GM12878 (cell line): ENCODE measurements at regions of chr2 and their contacts with region 1.

Region 1: GRCh38 chr2:196068271-196069209 is at the start of gene DNAH7:
- DNase-seq: peak; percentile 64
- ATAC-seq: peak; percentile 98
- H3K4me3 ChIP-seq: peak within 1 kb of the TSS; percentile 68
- H3K27ac ChIP-seq: peak within 1 kb of the TSS; percentile 43
- H3K4me1 ChIP-seq: no peaks in the 10 kb centered on the region; the same call in 1 of the 2 replicates
- H3K27me3 ChIP-seq: no peaks in the 10 kb centered on the region
- CTCF ChIP-seq: peak; percentile 91 to 98 (median 97); a peak in 5 of 6 replicates
- EP300 ChIP-seq: no peak; a peak in 1 of 4 replicates
- POLR2A ChIP-seq: peak; percentile 22; the same call in 1 of the 2 replicates
- RAD21 ChIP-seq: peak; percentile 92
- polyA plus RNA-seq, gene DNAH7: 0.05 to 0.14 TPM

Region 2: GRCh38 chr2:195533771-195534642 is 534.5 kb before region 1 on chr2:
- CTCF ChIA-PET with region 1: interaction called, 13 read pairs
- POLR2A ChIA-PET with region 1: no interaction called
- RAD21 ChIA-PET with region 1: interaction called, 4 read pairs
- SMC1A ChIA-PET with region 1: interaction called, 14 read pairs
- in situ Hi-C with region 1: no loop called
- intact Hi-C with region 1: no loop called
- DNase-seq: no peak
- ATAC-seq: peak; percentile 42
- H3K4me3 ChIP-seq: no peak overlapping the region
- H3K27ac ChIP-seq: no peak overlapping the region; the same call in 1 of the 2 replicates
- H3K4me1 ChIP-seq: peaks cover 29% of the 10 kb centered on the region
- H3K27me3 ChIP-seq: no peaks in the 10 kb centered on the region
- CTCF ChIP-seq: peak; percentile 23 to 35 (median 30); a peak in 3 of 6 replicates
- EP300 ChIP-seq: no peak
- POLR2A ChIP-seq: no peak
- RAD21 ChIP-seq: peak; percentile 27; the same call in 1 of the 2 replicates

Region 3: DNA sequence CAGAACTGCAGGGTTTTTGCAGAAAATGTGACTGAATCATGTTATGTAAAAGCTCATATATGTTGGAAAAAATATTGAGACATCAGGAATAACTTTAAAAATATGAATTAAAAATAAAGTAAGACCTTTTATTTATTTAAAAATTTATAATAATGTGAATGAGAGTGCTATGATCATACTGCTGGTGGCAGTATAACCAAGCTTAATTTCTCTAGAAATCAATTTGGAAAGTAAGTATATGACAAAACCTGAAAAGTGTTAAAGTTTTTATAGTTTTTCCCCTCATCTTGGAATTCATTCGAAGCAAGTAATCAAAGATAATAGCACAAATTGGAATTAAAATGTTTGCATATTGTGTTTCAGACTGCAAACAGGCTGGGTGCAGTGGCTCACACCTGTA is 404.0 kb before region 1 on chr2:
- CTCF ChIA-PET with region 1: interaction called, 89 read pairs
- POLR2A ChIA-PET with region 1: interaction called, 3 read pairs
- RAD21 ChIA-PET with region 1: interaction called, 32 read pairs
- SMC1A ChIA-PET with region 1: interaction called, 60 read pairs
- in situ Hi-C with region 1: no loop called
- intact Hi-C with region 1: loop called (anchors 2 kb)
- DNase-seq: no peak
- ATAC-seq: no peak
- H3K4me3 ChIP-seq: no peak overlapping the region
- H3K27ac ChIP-seq: no peak overlapping the region
- H3K4me1 ChIP-seq: no peaks in the 10 kb centered on the region
- H3K27me3 ChIP-seq: no peaks in the 10 kb centered on the region
- CTCF ChIP-seq: no peak; a peak in 1 of 6 replicates
- EP300 ChIP-seq: no peak
- POLR2A ChIP-seq: no peak
- RAD21 ChIP-seq: peak; percentile 45; the same call in 1 of the 2 replicates

Region 4: DNA sequence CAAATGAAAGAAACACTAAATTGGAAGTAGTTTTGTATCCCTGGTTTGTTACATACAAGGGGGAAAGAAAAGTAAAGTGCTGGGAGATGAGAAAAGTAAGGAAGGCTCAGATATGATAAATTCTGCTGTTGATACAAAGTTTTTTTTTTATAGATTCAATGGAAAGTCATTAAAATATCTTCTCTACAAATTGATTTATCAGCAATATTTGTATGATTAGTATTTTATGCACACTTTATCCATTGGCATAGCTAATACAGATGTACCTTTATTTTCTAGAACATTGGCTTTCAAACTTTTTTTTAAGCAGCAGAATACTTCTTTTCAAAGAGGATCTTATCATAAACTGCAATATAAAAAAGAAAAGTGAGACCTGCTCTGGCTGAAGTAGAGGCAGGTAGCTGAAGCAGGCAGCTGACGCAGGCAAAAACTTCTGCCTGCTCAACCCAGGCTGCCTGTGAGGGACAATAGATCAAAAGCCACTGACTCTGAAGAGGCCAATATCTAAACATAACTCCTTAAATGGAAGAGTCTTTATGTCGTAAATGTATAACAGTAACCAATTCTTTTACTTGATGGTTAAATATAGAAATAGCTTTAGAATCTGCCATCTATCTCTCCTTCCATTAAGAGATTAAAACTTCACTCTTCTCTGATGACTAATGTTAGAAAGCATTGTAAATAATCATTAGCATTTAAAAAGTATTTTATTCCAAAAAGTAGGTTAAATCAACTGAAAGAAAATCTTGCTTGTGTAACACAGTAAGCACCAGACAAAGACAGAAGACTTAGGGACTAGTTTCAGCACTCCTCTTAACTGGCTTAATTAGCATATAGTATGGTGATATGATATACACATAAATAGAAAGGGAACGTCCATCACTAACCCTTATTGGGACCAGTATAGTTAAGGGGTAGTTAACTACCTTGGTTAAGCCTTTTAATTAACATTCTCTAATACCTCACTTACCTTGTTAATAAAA is 237.3 kb before region 1 on chr2:
- CTCF ChIA-PET with region 1: interaction called, 3 read pairs
- POLR2A ChIA-PET with region 1: no interaction called
- RAD21 ChIA-PET with region 1: no interaction called
- SMC1A ChIA-PET with region 1: no interaction called
- in situ Hi-C with region 1: no loop called
- intact Hi-C with region 1: loop called (anchors 5 kb)
- DNase-seq: no peak
- ATAC-seq: no peak
- H3K4me3 ChIP-seq: no peak overlapping the region
- H3K27ac ChIP-seq: no peak overlapping the region
- H3K4me1 ChIP-seq: no peaks in the 10 kb centered on the region
- H3K27me3 ChIP-seq: no peaks in the 10 kb centered on the region
- CTCF ChIP-seq: no peak
- EP300 ChIP-seq: no peak
- POLR2A ChIP-seq: no peak
- RAD21 ChIP-seq: no peak

Region 5: GRCh38 chr2:195930082-195930481 is 138.5 kb before region 1 on chr2:
- CTCF ChIA-PET with region 1: no interaction called
- POLR2A ChIA-PET with region 1: no interaction called
- RAD21 ChIA-PET with region 1: no interaction called
- SMC1A ChIA-PET with region 1: no interaction called
- in situ Hi-C with region 1: no loop called
- intact Hi-C with region 1: no loop called
- DNase-seq: no peak
- ATAC-seq: no peak
- H3K4me3 ChIP-seq: no peak overlapping the region
- H3K27ac ChIP-seq: no peak overlapping the region
- H3K4me1 ChIP-seq: no peaks in the 10 kb centered on the region
- H3K27me3 ChIP-seq: no peaks in the 10 kb centered on the region
- CTCF ChIP-seq: no peak
- EP300 ChIP-seq: no peak
- POLR2A ChIP-seq: no peak
- RAD21 ChIP-seq: no peak

Region 6: GRCh38 chr2:195984923-195985726 is 83.4 kb before region 1 on chr2:
- CTCF ChIA-PET with region 1: interaction called, 19 read pairs
- POLR2A ChIA-PET with region 1: no interaction called
- RAD21 ChIA-PET with region 1: interaction called, 3 read pairs
- SMC1A ChIA-PET with region 1: interaction called, 5 read pairs
- in situ Hi-C with region 1: no loop called
- intact Hi-C with region 1: no loop called
- DNase-seq: no peak
- ATAC-seq: peak; percentile 44
- H3K4me3 ChIP-seq: no peak overlapping the region
- H3K27ac ChIP-seq: no peak overlapping the region
- H3K4me1 ChIP-seq: no peaks in the 10 kb centered on the region
- H3K27me3 ChIP-seq: no peaks in the 10 kb centered on the region
- CTCF ChIP-seq: no peak
- EP300 ChIP-seq: no peak
- POLR2A ChIP-seq: no peak
- RAD21 ChIP-seq: no peak

Region 7: DNA sequence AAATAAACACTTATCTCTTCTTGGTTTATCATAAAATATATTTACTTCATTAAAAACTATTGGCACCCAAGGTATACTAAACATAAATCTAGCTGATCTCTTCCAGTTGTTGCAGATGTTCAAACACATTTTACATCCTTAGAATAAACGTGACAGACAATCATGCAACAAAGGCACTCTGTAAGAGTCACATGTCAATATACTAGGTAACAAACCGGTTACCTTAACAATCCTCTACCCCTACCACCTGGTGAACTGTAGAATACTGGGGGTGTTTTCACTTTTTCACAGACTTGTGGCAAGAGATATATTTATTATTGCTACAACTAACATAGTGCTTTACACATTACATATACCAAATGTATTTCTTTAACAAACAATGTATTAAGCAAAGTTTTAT is 87.0 kb after region 1 on chr2:
- CTCF ChIA-PET with region 1: no interaction called
- POLR2A ChIA-PET with region 1: no interaction called
- RAD21 ChIA-PET with region 1: no interaction called
- SMC1A ChIA-PET with region 1: no interaction called
- in situ Hi-C with region 1: no loop called
- intact Hi-C with region 1: no loop called
- DNase-seq: no peak
- ATAC-seq: no peak
- H3K4me3 ChIP-seq: no peak overlapping the region
- H3K27ac ChIP-seq: no peak overlapping the region
- H3K4me1 ChIP-seq: peaks cover 22% of the 10 kb centered on the region
- H3K27me3 ChIP-seq: no peaks in the 10 kb centered on the region
- CTCF ChIP-seq: no peak
- EP300 ChIP-seq: no peak
- POLR2A ChIP-seq: no peak
- RAD21 ChIP-seq: no peak

Region 8: DNA sequence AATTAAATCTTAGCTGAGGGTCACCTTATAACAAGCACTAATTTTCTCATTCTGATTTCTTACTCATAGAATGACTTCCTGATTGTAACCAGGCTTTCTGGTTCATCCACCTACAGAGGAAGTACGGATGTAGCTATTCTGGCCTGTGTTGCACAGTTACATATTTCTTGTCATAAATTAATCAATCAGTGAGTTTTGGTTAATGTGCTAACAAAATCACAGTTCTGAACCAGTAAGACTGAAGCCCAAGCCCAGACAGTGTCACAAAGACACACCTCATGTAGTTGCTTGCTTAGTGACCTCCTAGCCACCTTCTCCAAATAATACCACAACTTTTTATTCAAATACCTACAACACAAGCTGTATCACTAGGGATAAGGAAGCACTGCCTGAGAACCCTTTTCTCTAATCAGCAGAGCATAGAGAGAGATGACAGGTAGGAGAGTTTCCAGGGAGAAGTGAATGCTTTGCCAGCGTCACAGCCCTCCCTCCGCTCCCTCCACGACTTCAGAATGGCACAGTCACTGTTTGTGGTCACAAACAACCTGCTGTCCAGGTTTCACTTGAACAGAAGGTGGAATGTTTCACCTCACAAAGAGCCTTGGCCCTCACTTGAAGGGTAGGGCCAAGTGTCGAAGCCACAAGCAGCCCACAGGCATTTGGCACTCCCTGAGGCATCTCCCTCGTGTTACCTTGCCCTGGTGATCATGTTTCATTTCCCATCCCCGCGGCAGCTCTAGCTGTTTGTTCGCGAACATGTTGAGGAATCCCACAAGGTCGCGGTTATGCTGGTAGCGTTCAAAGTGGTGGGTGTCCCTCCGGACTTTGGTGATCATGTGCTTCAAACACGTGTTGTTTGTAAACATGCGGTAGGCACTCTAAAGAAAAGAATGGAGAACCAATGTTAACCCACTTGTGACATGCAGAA is 223.6 kb after region 1 on chr2:
- CTCF ChIA-PET with region 1: interaction called, 12 read pairs
- POLR2A ChIA-PET with region 1: no interaction called
- RAD21 ChIA-PET with region 1: interaction called, 4 read pairs
- SMC1A ChIA-PET with region 1: interaction called, 3 read pairs
- in situ Hi-C with region 1: no loop called
- intact Hi-C with region 1: no loop called
- DNase-seq: no peak
- ATAC-seq: peak; percentile 10
- H3K4me3 ChIP-seq: no peak overlapping the region
- H3K27ac ChIP-seq: peak overlapping the region; percentile 51; the same call in 1 of the 2 replicates
- H3K4me1 ChIP-seq: peaks cover 32% of the 10 kb centered on the region
- H3K27me3 ChIP-seq: no peaks in the 10 kb centered on the region
- CTCF ChIP-seq: no peak
- EP300 ChIP-seq: no peak
- POLR2A ChIP-seq: no peak
- RAD21 ChIP-seq: no peak

Region 9: GRCh38 chr2:196558497-196558896 is 490.0 kb after region 1 on chr2:
- CTCF ChIA-PET with region 1: no interaction called
- POLR2A ChIA-PET with region 1: no interaction called
- RAD21 ChIA-PET with region 1: no interaction called
- SMC1A ChIA-PET with region 1: no interaction called
- in situ Hi-C with region 1: no loop called
- intact Hi-C with region 1: no loop called
- DNase-seq: no peak
- ATAC-seq: no peak
- H3K4me3 ChIP-seq: no peak overlapping the region
- H3K27ac ChIP-seq: no peak overlapping the region
- H3K4me1 ChIP-seq: no peaks in the 10 kb centered on the region
- H3K27me3 ChIP-seq: no peaks in the 10 kb centered on the region
- CTCF ChIP-seq: no peak
- EP300 ChIP-seq: no peak
- POLR2A ChIP-seq: no peak
- RAD21 ChIP-seq: no peak